ENCODE measurements at regions of chr17 and their contacts with region 1.

Region 1: GRCh38 chr17:64103391-64104364 is 26.3 kb downstream of the ERN1 start:
- DNase-seq: peak; percentile 63
- H3K4me3 ChIP-seq: peak overlapping the region; percentile 28
- H3K27ac ChIP-seq: peak overlapping the region; percentile 83
- H3K4me1 ChIP-seq: peaks cover 72% of the 10 kb centered on the region
- CTCF ChIP-seq: no peak

Region 2: GRCh38 chr17:64120127-64120810 is 16.6 kb after region 1 on chr17:
- CTCF ChIA-PET with region 1: interaction called, 3 read pairs
- POLR2A ChIA-PET with region 1: interaction called, 5 read pairs
- intact Hi-C with region 1: loop called (anchors 2 kb)
- DNase-seq: no peak
- H3K4me3 ChIP-seq: peak overlapping the region; percentile 20
- H3K27ac ChIP-seq: peak overlapping the region; percentile 51
- H3K4me1 ChIP-seq: peaks cover 30% of the 10 kb centered on the region
- CTCF ChIP-seq: no peak